ENCODE measurements at regions of chr5 and their contacts with region 1.

Region 1: DNA sequence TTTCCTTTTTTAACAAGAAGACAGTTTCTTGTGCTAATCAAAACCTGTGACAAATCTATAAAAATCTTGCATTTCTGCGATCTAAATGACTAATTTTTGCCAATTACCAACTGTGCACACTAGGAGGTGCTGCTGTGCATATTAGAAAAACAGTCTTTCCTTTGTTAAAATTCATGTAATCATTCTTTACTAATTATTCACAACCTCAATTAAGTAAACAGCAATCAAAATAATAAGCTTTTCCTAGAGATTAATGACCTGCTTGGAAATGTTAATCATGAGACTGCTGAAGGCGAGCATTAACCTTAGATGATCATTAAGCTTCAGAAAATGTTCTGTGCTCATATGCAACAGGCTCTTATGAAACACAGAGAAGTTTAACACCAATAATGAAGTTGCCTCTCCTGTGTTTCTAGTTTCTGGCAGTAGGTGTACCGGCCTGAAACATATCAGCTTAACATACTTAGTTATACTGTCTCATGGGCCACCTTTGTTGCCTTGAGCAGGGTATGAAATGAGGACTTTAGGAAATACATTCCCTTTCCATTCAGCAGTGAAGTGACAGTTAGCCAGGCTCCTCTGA is 17.7 kb downstream of the RFESD start:
- DNase-seq: peak; percentile 18
- H3K4me3 ChIP-seq: no peak overlapping the region
- H3K27ac ChIP-seq: peak overlapping the region in 2 of 4 donors; percentile 7 to 15
- H3K4me1 ChIP-seq: peaks cover 0 to 19% (median 3%) of the 10 kb centered on the region in 4 donors
- H3K27me3 ChIP-seq: no peaks in the 10 kb centered on the region
- CTCF ChIP-seq: peak; percentile 73 to 87 (median 77)
- EP300 ChIP-seq: no peak
- POLR2A ChIP-seq: no peak

Region 2: GRCh38 chr5:95631991-95632675 is 32.2 kb before region 1 on chr5:
- in situ Hi-C with region 1: no loop called
- intact Hi-C with region 1: no loop called
- DNase-seq: peak; percentile 13
- H3K4me3 ChIP-seq: no peak overlapping the region
- H3K27ac ChIP-seq: no peak overlapping the region
- H3K4me1 ChIP-seq: peaks cover 4 to 18% (median 12%) of the 10 kb centered on the region in 4 donors
- H3K27me3 ChIP-seq: no peaks in the 10 kb centered on the region
- CTCF ChIP-seq: no peak
- EP300 ChIP-seq: no peak
- POLR2A ChIP-seq: no peak

Region 3: DNA sequence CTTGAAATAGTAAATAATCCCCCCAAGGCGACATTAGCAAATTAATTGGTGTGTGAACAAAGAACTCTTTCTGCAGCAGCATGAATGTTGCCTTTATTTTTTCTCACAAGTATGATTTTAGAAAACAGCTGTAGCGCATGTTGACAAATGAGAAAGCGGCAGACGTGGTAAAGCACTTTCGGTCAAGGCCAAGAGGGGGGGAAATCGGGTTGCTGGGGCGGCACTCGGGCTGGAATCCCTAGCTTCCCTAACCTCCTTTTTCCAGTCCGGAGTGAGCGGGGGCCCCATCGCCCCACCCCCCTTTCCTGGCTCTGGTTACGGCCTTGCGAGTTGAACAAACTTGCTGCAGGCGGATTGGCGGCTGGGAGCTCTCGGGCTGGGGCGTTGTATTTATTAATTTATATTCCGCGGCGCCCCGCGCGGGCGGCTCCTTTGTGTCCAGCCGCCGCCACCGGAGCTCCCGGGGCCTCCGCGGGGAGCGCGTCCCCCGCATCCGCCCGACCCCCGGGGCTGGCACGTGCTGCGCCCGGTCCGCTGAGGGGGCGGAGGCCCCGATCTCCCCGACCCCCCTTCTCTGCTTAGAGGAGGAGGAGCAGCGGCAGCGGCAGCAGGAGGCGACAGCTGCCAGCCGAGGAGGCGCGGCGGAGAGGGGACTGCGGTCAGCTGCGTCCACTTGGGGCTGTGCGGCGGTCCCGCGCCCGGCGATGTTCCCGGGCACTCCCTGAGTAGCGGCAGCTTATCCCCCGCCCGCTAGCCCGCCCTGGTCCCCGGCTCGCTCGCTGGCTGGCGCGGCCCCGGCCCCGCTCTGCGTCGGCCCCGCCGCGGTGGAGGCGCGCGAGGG is 66.7 kb after region 1 on chr5 and contains the start of gene RHOBTB3:
- in situ Hi-C with region 1: loop called in 1 of 4 experiments (anchors 10 kb)
- intact Hi-C with region 1: loop called (anchors 10 kb)
- DNase-seq: peak; percentile 89
- H3K4me3 ChIP-seq: peak within 1 kb of the TSS; percentile 79 to 95 (median 84)
- H3K27ac ChIP-seq: peak within 1 kb of the TSS; percentile 93 to 95 (median 94)
- H3K4me1 ChIP-seq: peaks cover 4 to 81% (median 44%) of the 10 kb centered on the region in 4 donors
- H3K27me3 ChIP-seq: no peaks in the 10 kb centered on the region
- CTCF ChIP-seq: peak in 1 of 5 experiments; percentile 9
- EP300 ChIP-seq: no peak
- POLR2A ChIP-seq: peak; percentile 74
- total RNA-seq, gene RHOBTB3: 53.0 to 143 (median 84.2) TPM

Region 4: DNA sequence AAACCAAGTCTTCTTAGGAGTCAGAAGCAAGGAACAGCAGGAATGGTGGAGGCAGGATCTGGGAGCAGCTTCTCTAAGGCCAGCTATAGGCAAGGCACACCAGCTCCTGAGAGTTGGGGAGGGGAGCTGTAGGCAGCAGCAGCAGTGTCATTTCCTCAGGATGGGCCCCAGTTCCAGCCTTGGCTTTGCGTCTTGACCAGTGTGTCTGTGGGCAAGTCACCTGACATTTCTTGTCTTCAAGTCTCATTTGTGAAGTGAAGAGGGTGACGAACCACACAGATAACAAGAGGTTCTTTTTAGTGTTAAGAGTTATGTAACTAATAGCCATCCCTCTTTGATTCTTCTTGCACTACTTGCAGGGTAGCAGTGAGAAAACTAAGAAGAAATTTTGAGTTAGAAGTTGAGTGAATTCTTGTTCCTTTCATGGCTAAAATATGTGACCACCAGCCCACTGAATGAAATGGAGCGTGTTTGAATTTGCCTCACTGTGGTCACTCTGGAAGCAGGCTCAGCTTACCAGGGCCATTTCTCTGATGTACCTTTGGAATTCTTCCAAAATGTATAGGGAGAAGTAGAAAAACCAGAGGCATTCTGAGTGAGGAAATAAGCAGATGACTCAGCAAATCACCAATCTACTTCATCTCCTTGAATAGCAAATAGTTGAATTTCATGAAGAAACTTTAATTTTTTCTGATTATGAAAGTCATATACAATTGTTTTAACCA is 109.2 kb after region 1 on chr5:
- in situ Hi-C with region 1: loop called in 2 of 4 experiments (anchors 5 to 10 kb)
- intact Hi-C with region 1: loop called (anchors 10 kb)
- DNase-seq: no peak
- H3K4me3 ChIP-seq: no peak overlapping the region
- H3K27ac ChIP-seq: no peak overlapping the region
- H3K4me1 ChIP-seq: peaks cover 0 to 8% (median 2%) of the 10 kb centered on the region in 4 donors
- H3K27me3 ChIP-seq: no peaks in the 10 kb centered on the region
- CTCF ChIP-seq: no peak
- EP300 ChIP-seq: no peak
- POLR2A ChIP-seq: no peak

Measured in transverse colon (tissue), 4 donors.